ENCODE measurements at regions of chr11 and their contacts with region 1.

Region 1: DNA sequence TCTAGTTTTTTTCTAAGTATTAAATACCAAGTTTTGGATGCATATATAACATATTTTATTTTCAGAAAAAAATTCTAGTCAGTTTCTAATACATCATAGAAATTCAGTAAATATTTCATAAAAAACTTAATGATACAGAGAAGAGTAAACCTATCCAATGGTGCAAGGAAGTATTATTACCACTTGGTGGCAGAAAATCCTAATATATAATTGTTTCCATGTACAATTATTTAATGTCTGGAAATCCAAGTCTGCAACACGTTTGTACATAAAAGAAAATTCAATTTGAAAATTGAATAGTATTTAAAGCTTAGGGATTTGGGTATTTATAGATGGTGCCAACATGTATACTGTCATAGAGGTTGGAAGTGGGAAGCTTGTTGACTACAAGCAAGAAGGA is 127.0 kb downstream of the TRPC6 start:
- DNase-seq: no peak
- ATAC-seq: no peak
- H3K4me3 ChIP-seq: no peak overlapping the region
- H3K27ac ChIP-seq: no peak overlapping the region
- H3K4me1 ChIP-seq: no peaks in the 10 kb centered on the region
- H3K27me3 ChIP-seq: no peaks in the 10 kb centered on the region

Region 2: GRCh38 chr11:101848262-101848661 is 391.4 kb after region 1 on chr11:
- intact Hi-C with region 1: loop called in 3 of 4 experiments (anchors 5 to 10 kb)
- DNase-seq: no peak
- ATAC-seq: no peak
- H3K4me3 ChIP-seq: no peak overlapping the region
- H3K27ac ChIP-seq: no peak overlapping the region
- H3K4me1 ChIP-seq: no peaks in the 10 kb centered on the region
- H3K27me3 ChIP-seq: no peaks in the 10 kb centered on the region

Measured in right cardiac atrium (tissue), 5 donors.